Aorta (tissue), 5 donors: ENCODE measurements at regions of chr4 and their contacts with region 1.

Region 1: DNA sequence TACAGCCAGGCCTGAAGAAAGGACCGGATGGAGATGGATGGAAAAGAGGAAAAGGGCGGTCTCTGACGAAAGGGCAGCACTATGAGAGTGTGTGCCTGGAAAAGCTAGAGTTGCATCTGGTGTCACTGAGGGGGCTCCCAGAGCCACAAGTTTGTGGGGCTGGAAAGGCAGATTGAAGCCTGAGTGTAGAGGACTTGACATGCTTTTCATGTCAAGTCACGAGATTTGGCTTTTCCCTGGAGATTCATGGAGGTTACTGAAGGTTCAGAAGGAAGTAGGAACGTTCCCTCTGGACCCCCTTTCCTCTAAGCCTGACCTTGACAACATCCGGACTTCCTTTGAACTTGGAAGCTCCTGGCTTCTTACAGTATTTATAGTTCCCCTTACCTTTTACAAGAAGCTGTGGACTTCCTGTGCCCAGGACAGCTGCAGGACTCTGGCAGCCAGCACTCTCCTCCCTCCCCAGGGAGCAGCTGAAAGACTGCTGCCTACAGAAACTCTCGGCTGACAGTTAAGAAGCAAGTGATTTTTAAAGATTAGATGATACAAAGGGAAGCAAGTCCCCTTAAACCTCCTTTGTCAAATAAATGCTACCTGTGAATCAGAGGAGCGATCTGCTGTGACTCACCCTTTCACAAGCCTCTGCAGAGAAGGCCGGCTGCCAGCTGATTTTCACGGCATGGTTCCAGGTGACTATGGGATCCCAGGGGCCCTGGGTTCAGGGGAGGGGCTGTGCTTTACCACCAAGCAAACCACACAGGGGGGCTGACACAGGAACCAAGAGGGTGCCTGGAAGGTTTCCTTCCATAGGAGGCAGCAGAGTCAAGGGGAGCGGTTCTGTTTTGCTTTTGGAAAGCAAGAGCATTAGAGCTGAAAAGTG is 72.9 kb upstream of the STIM2 start:
- DNase-seq: peak; percentile 57 to 83
- ATAC-seq: peak; percentile 39
- H3K4me3 ChIP-seq: no peak overlapping the region
- H3K27ac ChIP-seq: no peak overlapping the region
- H3K4me1 ChIP-seq: peaks cover 3 to 8% of the 10 kb centered on the region in 2 donors
- H3K27me3 ChIP-seq: peaks cover 0 to 1% of the 10 kb centered on the region in 2 donors

Region 2: DNA sequence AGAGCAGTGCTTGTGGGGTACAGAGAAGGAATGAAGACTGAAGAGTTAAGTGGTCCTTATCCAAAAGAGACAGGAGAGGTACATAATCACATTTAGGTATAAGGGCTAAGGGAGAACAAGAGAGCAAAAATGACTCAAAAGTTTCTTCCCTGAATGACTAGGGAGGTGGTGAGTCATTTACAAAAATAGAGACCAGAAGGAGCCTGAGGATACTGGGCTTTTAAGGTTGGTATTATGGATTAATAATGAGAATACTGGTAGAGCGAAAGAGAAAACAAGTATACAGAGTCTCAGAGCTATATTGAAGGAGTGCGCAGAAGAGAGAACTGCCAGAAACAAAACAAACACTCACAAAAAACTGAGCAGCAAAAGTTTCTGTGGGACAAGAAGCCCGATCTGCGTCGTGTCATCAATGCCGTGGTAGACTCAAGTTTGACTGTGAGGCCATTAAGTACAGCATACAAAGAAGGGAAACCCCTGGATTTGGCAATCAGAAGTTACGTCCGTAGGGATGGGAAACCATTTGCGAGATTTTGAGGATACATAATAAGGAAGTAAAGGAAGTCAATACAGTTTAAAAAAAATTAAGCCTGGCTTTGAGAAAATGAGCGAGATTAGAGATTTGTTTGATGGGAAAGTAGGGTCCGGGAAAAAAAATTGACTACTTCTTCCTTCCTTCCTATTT is 56.2 kb before region 1 on chr4:
- intact Hi-C with region 1: no loop called
- DNase-seq: no peak
- ATAC-seq: no peak
- H3K4me3 ChIP-seq: no peak overlapping the region
- H3K27ac ChIP-seq: no peak overlapping the region
- H3K4me1 ChIP-seq: no peaks in the 10 kb centered on the region
- H3K27me3 ChIP-seq: peaks cover 0 to 2% of the 10 kb centered on the region in 2 donors

Region 3: DNA sequence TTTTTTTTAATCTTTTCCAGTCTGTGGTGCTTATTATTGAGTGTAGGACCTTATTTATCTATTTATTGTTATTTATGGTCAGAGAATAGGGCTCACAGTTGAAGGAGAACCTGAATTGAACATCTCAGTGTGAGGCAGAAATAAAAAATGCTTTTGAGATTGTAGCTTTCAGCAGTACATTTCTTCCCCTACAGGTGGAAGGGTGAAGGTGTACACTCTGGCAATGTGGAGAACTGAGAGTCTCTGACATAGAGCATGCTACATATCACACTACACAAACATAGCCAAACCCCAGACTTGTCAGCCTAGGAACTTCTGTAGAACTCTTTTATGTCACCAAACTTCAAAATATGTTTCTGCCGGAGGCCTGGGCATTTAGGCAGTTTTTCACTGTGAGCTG is 213.1 kb after region 1 on chr4:
- intact Hi-C with region 1: loop called in 1 of 2 experiments (anchors 10 kb)
- DNase-seq: no peak
- ATAC-seq: no peak
- H3K4me3 ChIP-seq: no peak overlapping the region
- H3K27ac ChIP-seq: no peak overlapping the region
- H3K4me1 ChIP-seq: peaks cover 0 to 2% of the 10 kb centered on the region in 2 donors
- H3K27me3 ChIP-seq: no peaks in the 10 kb centered on the region